ENCODE measurements at regions of chr11 and their contacts with region 1.

Region 1: DNA sequence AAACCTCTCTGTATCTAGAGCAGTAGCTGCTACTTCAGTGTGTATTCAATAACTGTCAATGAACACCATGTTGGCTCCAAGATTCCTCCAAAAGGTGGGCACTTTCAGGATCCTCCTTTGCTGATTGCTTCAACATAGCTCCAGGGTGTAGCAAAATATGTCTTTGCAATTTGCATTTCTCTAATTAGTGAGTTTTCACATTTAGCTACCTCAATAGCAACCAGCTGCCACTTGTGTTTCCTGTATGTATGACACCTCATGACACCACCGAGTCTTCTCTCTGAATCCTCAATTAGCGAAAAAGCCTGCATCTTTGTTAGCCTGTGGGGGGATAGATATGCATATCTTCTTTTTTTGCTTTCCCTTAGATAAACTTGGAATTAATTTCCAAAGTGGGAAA is 898.3 kb upstream of the FAT3 start:
- DNase-seq: no peak
- ATAC-seq: no peak
- H3K4me3 ChIP-seq: no peak overlapping the region
- H3K4me3 Mint-ChIP-seq: no peak overlapping the region
- H3K27ac ChIP-seq: no peak overlapping the region
- H3K27ac Mint-ChIP-seq: no peak overlapping the region
- H3K4me1 ChIP-seq: no peaks in the 10 kb centered on the region
- H3K4me1 Mint-ChIP-seq: no peaks in the 10 kb centered on the region
- H3K27me3 ChIP-seq: no peaks in the 10 kb centered on the region
- H3K27me3 Mint-ChIP-seq: no peaks in the 10 kb centered on the region
- CTCF ChIP-seq: no peak

Region 2: DNA sequence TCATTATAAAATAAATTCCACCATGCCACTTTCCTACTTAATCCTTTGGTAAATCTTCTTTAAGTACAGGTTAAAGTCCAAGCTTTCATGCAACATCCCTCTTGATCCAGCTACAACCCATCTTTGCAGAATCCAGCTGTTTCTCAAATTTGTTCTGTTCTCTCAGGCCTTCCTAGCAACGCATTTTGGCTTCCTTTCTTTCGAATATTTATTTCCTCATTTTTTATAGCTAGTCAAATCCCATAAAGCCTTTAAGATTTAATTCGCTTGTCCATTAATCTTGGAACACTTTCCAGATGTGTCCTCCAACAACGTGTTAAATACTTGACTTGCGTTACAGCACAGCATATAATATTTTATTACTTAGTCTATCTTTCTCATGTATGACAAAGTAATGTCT is 503.3 kb before region 1 on chr11:
- CTCF ChIA-PET with region 1: no interaction called
- POLR2A ChIA-PET with region 1: no interaction called
- intact Hi-C with region 1: no loop called
- DNase-seq: no peak
- ATAC-seq: no peak
- H3K4me3 ChIP-seq: no peak overlapping the region
- H3K4me3 Mint-ChIP-seq: no peak overlapping the region
- H3K27ac ChIP-seq: no peak overlapping the region
- H3K27ac Mint-ChIP-seq: no peak overlapping the region
- H3K4me1 ChIP-seq: no peaks in the 10 kb centered on the region
- H3K4me1 Mint-ChIP-seq: no peaks in the 10 kb centered on the region
- H3K27me3 ChIP-seq: no peaks in the 10 kb centered on the region
- H3K27me3 Mint-ChIP-seq: no peaks in the 10 kb centered on the region
- CTCF ChIP-seq: no peak

Region 3: DNA sequence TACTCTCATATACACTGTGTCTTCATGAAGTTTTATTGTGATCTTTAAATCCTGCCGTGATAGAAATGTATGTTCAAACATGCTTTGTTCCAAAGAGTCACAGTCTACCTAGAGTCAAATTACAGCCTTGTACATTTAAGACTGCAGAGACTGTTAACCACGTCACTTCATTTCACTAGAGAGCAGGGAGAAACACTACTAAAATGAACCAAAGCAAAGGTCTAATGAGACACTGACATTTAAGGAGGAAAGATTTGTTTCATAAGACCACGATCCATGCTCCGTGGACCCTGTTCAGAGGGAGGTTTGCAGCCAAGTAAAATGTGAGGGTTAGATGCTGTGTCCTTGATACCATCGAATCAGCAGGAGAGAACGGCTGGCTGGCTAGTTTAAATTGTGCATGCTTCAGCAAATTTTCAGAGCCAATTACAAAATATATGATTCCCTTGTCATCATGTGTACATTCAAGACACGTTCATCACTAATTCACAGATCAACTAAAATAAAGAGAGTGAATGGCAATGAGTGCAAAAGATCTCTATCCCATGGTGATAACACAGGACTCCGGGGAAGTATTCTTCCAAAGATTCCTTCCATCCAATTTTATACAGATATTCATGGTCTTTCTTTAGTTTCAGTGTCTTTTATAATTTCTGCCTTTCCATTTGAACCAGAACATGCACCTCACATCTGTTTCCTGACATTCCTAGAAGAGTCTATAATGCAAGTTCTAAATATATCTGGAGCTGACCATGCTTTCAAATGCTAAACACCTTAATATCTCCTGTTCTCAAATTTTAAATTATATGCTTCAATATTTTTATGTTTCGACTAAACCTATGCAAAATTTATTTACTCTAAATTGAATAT is 62.5 kb before region 1 on chr11:
- CTCF ChIA-PET with region 1: no interaction called
- POLR2A ChIA-PET with region 1: no interaction called
- intact Hi-C with region 1: loop called in 1 of 2 experiments (anchors 2 kb)
- DNase-seq: no peak
- ATAC-seq: no peak
- H3K4me3 ChIP-seq: no peak overlapping the region
- H3K4me3 Mint-ChIP-seq: no peak overlapping the region
- H3K27ac ChIP-seq: no peak overlapping the region
- H3K27ac Mint-ChIP-seq: no peak overlapping the region
- H3K4me1 ChIP-seq: no peaks in the 10 kb centered on the region
- H3K4me1 Mint-ChIP-seq: no peaks in the 10 kb centered on the region
- H3K27me3 ChIP-seq: no peaks in the 10 kb centered on the region
- H3K27me3 Mint-ChIP-seq: no peaks in the 10 kb centered on the region
- CTCF ChIP-seq: no peak

Region 4: DNA sequence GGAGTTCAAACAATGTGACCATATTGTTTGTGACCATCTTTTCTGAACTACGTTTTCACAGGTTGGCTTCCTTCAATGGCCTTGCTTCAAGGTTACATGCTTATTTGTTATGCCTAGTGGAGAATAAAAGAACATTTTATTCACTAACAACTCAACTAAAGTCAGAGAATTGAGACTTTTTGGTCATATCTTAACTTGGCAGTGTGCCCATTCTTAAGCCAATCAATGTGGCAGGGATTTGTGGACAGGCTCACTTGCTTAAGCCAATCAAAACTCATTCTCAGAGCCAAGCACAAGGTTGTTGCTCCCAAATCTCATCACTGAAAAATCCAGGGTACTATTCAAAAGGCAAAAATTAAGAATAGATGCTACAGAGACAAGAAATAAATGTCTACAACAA is 442.5 kb after region 1 on chr11:
- CTCF ChIA-PET with region 1: no interaction called
- POLR2A ChIA-PET with region 1: no interaction called
- intact Hi-C with region 1: no loop called
- DNase-seq: no peak
- ATAC-seq: no peak
- H3K4me3 ChIP-seq: no peak overlapping the region
- H3K4me3 Mint-ChIP-seq: no peak overlapping the region
- H3K27ac ChIP-seq: no peak overlapping the region
- H3K27ac Mint-ChIP-seq: no peak overlapping the region
- H3K4me1 ChIP-seq: no peaks in the 10 kb centered on the region
- H3K4me1 Mint-ChIP-seq: no peaks in the 10 kb centered on the region
- H3K27me3 ChIP-seq: no peaks in the 10 kb centered on the region
- H3K27me3 Mint-ChIP-seq: no peaks in the 10 kb centered on the region
- CTCF ChIP-seq: no peak

Measured in CD4-positive, alpha-beta T cell (primary cell).